Caco-2 (cell line): ENCODE measurements at regions of chr6 and their contacts with region 1.

Region 1: GRCh38 chr6:113980937-113981554 is 10.1 kb upstream of the HDAC2 start:
- DNase-seq: peak; percentile 50 to 66
- H3K4me3 ChIP-seq: no peak overlapping the region
- H3K4me3 Mint-ChIP-seq: no peak overlapping the region
- H3K27ac Mint-ChIP-seq: no peak overlapping the region
- H3K4me1 ChIP-seq: no peaks in the 10 kb centered on the region
- H3K4me1 Mint-ChIP-seq: no peaks in the 10 kb centered on the region
- H3K27me3 ChIP-seq: no peaks in the 10 kb centered on the region
- H3K27me3 Mint-ChIP-seq: no peaks in the 10 kb centered on the region
- CTCF ChIP-seq: peak; percentile 76 to 78

Region 2: DNA sequence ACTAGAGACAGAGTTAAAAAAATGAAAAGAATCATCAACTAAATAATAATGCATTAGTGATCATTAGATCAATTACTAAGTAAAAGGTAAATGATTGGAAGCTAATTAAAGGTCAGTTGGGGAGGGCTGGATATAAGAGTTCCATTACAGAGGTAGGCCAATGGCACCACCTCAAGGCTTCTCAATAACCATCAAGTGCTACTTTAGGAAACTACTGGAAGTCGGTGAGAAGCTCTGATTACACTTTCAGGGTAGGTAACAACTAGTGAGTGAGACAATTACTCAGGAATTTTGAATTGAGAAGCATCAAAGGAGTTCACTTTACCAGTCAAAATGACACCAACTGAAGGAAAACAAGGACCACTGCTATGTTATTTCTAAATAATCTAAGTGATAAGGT is 80.1 kb after region 1 on chr6:
- CTCF ChIA-PET with region 1: interaction called, 10 read pairs
- POLR2A ChIA-PET with region 1: no interaction called
- intact Hi-C with region 1: no loop called
- DNase-seq: no peak
- H3K4me3 ChIP-seq: no peak overlapping the region
- H3K4me3 Mint-ChIP-seq: no peak overlapping the region
- H3K27ac Mint-ChIP-seq: no peak overlapping the region
- H3K4me1 ChIP-seq: peaks cover 16% of the 10 kb centered on the region
- H3K4me1 Mint-ChIP-seq: peaks cover 12% of the 10 kb centered on the region
- H3K27me3 ChIP-seq: no peaks in the 10 kb centered on the region
- H3K27me3 Mint-ChIP-seq: no peaks in the 10 kb centered on the region
- CTCF ChIP-seq: no peak